Common myeloid progenitor, CD34-positive (primary cell): ENCODE measurements at regions of chr1 and their contacts with region 1.

Region 1: GRCh38 chr1:226569879-226570547 is 21.4 kb downstream of the STUM start:
- DNase-seq: peak; percentile 54 to 78 (median 78)
- H3K4me3 ChIP-seq: no peak overlapping the region
- H3K27ac ChIP-seq: no peak overlapping the region
- H3K4me1 ChIP-seq: no peaks in the 10 kb centered on the region
- H3K27me3 ChIP-seq: peaks cover 0 to 8% (median 0%) of the 10 kb centered on the region in 5 experiments

Region 2: GRCh38 chr1:226397011-226397926 is 172.7 kb before region 1 on chr1:
- CTCF ChIA-PET with region 1: no interaction called
- POLR2A ChIA-PET with region 1: no interaction called
- DNase-seq: no peak
- H3K4me3 ChIP-seq: no peak overlapping the region
- H3K27ac ChIP-seq: no peak overlapping the region
- H3K4me1 ChIP-seq: no peaks in the 10 kb centered on the region
- H3K27me3 ChIP-seq: no peaks in the 10 kb centered on the region

Region 3: DNA sequence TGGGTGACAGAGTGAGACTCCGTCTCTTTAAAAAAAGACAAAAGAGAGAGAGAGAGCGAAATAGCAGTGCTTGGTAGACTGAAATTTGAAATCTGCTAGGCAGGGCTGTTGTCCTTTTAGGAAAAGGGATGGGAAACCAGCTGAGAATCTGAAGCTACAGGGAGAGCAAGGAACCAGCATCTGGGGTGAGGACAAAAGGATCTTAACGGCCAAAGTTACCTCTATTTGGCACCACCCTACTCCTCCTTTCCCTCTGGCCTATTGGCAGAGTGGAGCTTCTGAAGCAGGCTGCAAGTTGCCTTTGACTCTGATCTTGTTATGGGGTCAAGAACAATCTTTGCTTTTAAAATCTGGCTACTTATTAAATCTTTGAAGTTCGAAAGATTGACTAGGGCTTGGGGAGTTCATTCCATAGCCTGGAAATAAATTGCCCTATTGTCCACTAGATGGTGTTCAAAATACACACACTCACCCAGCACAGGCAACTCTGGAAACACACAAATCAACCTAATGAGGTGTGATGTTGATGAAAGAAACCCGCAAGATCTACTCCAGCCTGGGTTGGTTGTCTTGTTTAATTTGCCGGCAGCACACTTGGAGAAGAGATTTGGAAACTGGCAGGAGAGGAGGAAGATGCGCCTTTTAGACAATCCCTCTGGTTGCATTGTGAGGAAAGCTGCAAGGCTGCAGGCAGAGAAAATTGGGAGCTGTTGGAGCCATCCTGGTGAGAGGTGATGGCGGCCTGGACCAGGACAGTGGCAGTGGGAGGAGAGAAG is 145.6 kb before region 1 on chr1:
- CTCF ChIA-PET with region 1: interaction called, 15 read pairs
- POLR2A ChIA-PET with region 1: no interaction called
- DNase-seq: peak in 2 of 3 donors; percentile 65 to 74
- H3K4me3 ChIP-seq: no peak overlapping the region
- H3K27ac ChIP-seq: no peak overlapping the region
- H3K4me1 ChIP-seq: peaks cover 6 to 28% (median 23%) of the 10 kb centered on the region in 4 experiments
- H3K27me3 ChIP-seq: no peaks in the 10 kb centered on the region

Region 4: GRCh38 chr1:226541631-226542622 is 28.1 kb before region 1 on chr1:
- CTCF ChIA-PET with region 1: interaction called, 21 read pairs
- POLR2A ChIA-PET with region 1: no interaction called
- DNase-seq: peak in 2 of 3 donors; percentile 17
- H3K4me3 ChIP-seq: no peak overlapping the region
- H3K27ac ChIP-seq: no peak overlapping the region
- H3K4me1 ChIP-seq: no peaks in the 10 kb centered on the region
- H3K27me3 ChIP-seq: peaks cover 0 to 8% (median 4%) of the 10 kb centered on the region in 5 experiments

Region 5: DNA sequence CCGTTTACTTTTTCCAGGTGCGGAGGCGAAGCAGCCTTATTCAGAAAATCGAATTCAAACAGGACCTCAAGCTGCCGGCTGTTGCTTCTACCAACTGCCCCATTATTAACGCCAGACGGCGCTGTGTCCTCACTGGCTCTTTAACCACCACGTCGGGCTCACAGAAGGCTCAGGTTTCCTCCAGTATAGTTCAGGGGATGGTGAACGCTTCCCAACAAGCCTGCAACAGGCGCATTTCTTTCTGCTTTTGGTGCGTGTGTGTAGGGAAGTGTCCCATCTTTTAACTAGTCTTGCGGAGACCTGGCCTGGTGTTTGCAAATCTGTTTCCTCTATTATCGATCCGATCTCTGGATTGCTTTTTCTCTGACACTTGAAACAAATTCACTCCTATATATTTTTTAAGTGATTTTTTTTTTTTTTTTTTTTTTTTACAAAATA is 22.2 kb before region 1 on chr1:
- CTCF ChIA-PET with region 1: interaction called, 21 read pairs
- POLR2A ChIA-PET with region 1: no interaction called
- DNase-seq: peak; percentile 83 to 88 (median 86)
- H3K4me3 ChIP-seq: peak overlapping the region in 1 of 7 experiments; percentile 33
- H3K27ac ChIP-seq: no peak overlapping the region
- H3K4me1 ChIP-seq: peaks cover 0 to 24% (median 23%) of the 10 kb centered on the region in 4 experiments
- H3K27me3 ChIP-seq: peaks cover 2 to 49% (median 34%) of the 10 kb centered on the region in 5 experiments

Region 6: DNA sequence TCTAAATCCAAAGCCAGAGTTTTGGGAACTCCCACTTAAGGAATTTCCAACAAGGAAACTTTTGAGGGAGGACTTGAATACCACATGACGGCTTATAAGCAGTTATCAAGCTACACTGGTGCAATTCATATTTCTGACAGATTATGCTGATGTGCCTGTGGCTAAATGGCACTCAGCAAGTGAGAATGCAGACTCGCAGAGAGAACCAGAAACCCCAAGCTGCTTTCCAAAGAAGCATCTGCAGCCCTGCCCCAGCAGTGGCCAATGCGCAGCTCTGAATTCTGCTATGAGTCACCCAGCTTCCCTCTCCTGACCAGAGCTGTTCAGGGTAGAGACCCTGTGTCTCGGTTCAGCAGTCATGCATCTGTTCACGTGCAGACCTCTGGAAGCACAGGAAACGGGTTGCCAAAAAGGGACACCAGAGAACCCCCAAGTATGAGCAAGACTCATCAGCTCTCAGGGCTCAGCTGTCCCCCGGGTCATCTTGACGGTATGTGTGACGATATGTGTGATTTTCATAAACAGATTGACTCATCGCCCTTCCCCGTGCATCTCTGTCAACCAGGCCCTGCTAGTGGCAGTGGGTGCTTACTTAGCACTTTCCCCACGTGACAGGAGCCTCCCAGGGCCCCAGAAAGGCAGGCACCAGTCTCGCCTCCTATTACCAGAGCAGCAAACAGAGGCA is 92.8 kb after region 1 on chr1:
- CTCF ChIA-PET with region 1: no interaction called
- POLR2A ChIA-PET with region 1: no interaction called
- DNase-seq: peak; percentile 70 to 92 (median 89)
- H3K4me3 ChIP-seq: no peak overlapping the region
- H3K27ac ChIP-seq: peak overlapping the region in 1 of 2 experiments; percentile 54
- H3K4me1 ChIP-seq: peaks cover 29 to 85% (median 70%) of the 10 kb centered on the region in 4 experiments
- H3K27me3 ChIP-seq: no peaks in the 10 kb centered on the region

Region 7: DNA sequence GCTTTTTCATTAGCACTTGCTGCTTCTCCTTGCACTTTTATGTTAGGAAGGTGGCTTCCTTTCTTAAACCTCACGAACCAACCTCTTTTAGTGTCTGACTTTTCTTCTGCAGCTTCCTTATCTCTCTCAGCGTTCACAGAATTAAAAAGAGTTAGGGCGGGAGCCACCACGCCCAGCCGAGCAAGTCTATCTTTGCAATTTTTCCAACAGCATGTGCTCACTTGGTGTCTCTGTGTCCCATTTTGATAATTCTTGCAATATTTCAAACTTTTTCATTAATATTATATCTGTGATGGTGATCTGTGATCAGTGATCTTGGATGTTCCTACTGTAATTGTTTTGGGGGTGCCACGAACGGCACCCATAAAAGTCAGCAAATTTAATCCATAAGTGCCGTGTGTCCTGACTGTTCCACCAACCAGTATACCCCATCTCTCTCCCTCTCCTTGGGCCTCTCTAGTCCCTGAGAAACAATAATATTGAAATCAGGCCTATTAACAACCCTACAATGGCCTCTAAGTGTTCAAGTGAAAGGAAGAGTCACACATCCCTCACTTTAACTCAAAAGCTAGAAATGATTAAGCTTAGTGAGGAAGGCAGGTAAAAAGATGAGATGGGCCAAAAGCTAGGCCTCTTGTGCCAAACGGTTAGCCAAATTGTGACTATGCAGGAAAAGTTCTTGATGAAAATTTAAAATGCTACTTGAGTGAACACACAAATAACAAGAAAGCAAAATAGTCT is 184.9 kb after region 1 on chr1:
- CTCF ChIA-PET with region 1: no interaction called
- POLR2A ChIA-PET with region 1: no interaction called
- DNase-seq: peak in 1 of 3 donors; percentile 13
- H3K4me3 ChIP-seq: no peak overlapping the region
- H3K27ac ChIP-seq: no peak overlapping the region
- H3K4me1 ChIP-seq: no peaks in the 10 kb centered on the region
- H3K27me3 ChIP-seq: no peaks in the 10 kb centered on the region